ENCODE measurements at regions of chr9 and their contacts with region 1.

Region 1: DNA sequence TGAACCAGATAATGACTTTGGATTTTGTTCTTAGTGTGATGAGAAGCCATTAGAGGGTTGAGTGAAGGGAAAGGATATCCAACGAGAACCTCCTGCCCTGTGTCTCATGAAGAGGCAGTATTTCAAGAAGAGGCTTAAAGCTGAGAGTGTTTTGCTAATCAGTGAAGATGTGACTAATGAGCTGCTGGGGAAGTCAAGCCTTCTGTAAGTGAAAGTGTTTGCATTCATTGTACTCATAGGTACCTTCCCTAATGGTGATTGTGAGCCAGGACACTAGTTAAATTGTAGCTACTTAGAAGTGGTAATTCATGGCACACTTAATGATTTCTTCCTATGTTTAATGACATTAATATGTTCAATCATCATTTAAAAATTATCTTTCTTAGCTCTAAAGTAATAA is 23.7 kb downstream of the PIP5K1B start:
- DNase-seq: no peak
- ATAC-seq: no peak
- H3K4me3 ChIP-seq: no peak overlapping the region
- H3K27ac ChIP-seq: no peak overlapping the region
- H3K4me1 ChIP-seq: no peaks in the 10 kb centered on the region
- H3K27me3 ChIP-seq: no peaks in the 10 kb centered on the region
- CTCF ChIP-seq: no peak
- POLR2A ChIP-seq: no peak
- RAD21 ChIP-seq: no peak

Region 2: GRCh38 chr9:68844631-68845612 is 116.2 kb after region 1 on chr9:
- CTCF ChIA-PET with region 1: no interaction called
- POLR2A ChIA-PET with region 1: no interaction called
- dilution Hi-C with region 1: no loop called
- in situ Hi-C with region 1: no loop called
- intact Hi-C with region 1: loop called (anchors 5 kb)
- DNase-seq: peak; percentile 8
- ATAC-seq: no peak
- H3K4me3 ChIP-seq: no peak overlapping the region
- H3K27ac ChIP-seq: no peak overlapping the region
- H3K4me1 ChIP-seq: no peaks in the 10 kb centered on the region
- H3K27me3 ChIP-seq: no peaks in the 10 kb centered on the region
- CTCF ChIP-seq: peak; percentile 39
- POLR2A ChIP-seq: no peak
- RAD21 ChIP-seq: peak; percentile 35

Measured in IMR-90 (cell line).